ENCODE measurements at regions of chr21 and their contacts with region 1.

Region 1: DNA sequence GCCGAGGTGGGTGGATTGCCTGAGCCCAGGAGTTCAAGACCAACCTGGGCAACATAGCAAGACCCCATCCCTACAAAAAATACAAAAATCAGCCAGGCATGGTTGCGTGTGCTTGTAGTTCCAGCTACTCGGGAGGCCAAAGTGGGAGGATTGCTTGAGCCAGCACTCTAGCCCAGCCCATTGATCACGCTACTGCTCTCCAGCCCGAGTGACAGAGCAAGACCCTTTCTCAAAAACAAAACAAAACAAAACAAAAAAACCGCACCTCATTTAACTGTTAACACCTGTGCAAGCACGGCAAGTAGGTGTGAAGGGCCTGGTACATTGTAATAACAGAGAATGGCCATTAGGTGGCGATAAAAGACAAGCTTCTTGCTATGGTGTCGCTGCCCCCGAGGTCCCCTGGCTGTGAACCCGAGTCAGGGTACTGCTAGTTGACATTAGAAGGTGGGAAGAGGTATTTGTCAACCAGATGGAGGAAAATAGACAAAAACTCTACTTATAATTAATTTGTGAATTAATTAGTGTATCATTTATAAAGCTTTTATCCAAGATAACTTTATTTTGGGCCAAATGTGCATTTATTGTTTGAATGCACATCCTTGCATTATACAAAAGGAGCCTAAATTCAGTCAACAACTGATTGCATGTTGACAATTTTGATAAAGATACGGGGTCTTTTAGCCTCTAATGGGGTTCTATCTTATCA is 66.5 kb downstream of the SH3BGR start:
- DNase-seq: peak; percentile 68
- ATAC-seq: peak; percentile 60
- H3K4me3 ChIP-seq: no peak overlapping the region
- H3K4me3 Mint-ChIP-seq: no peak overlapping the region
- H3K27ac ChIP-seq: no peak overlapping the region
- H3K27ac Mint-ChIP-seq: no peak overlapping the region
- H3K4me1 ChIP-seq: no peaks in the 10 kb centered on the region
- H3K4me1 Mint-ChIP-seq: peaks cover 1% of the 10 kb centered on the region
- H3K27me3 ChIP-seq: peaks cover 0 to 3% (median 0%) of the 10 kb centered on the region in 4 experiments
- H3K27me3 Mint-ChIP-seq: peaks cover 3% of the 10 kb centered on the region
- CTCF ChIP-seq: peak; percentile 93

Region 2: GRCh38 chr21:39288987-39289386 is 229.3 kb before region 1 on chr21:
- CTCF ChIA-PET with region 1: no interaction called
- POLR2A ChIA-PET with region 1: no interaction called
- intact Hi-C with region 1: no loop called
- DNase-seq: no peak
- ATAC-seq: no peak
- H3K4me3 ChIP-seq: no peak overlapping the region
- H3K4me3 Mint-ChIP-seq: no peak overlapping the region
- H3K27ac ChIP-seq: no peak overlapping the region
- H3K27ac Mint-ChIP-seq: no peak overlapping the region
- H3K4me1 ChIP-seq: no peaks in the 10 kb centered on the region
- H3K4me1 Mint-ChIP-seq: peaks cover 3% of the 10 kb centered on the region
- H3K27me3 ChIP-seq: no peaks in the 10 kb centered on the region
- H3K27me3 Mint-ChIP-seq: no peaks in the 10 kb centered on the region
- CTCF ChIP-seq: no peak

Region 3: DNA sequence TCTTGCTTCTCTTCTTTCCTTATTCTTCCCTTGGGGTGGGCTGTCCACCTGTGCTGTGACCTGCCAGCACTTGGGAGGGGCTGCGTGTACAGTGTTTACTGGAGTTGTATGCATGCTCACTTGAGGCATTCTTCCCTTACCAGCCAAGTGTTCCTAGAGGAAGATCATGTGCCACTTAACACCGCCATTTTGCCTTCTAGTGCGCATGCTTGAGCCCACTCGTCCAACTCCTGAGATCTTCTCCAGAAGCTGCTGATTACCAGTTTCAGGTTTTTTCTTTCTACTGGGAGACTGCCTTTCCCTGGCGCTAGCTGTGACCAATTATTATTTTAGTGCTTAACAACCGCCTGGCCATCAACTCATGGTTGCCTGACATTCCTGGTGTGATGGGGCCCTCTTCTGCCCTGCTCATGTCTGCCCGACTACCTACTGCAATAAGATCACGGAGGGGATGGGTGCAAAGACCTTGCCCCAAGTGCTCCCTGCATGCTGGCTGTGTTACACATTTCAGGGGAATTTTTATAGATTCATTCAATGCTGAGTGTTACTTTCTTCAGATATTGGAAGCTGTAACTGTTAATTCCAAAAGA is 20.3 kb after region 1 on chr21:
- CTCF ChIA-PET with region 1: interaction called, 6 read pairs
- POLR2A ChIA-PET with region 1: no interaction called
- intact Hi-C with region 1: loop called (anchors 2 kb)
- DNase-seq: no peak
- ATAC-seq: no peak
- H3K4me3 ChIP-seq: no peak overlapping the region
- H3K4me3 Mint-ChIP-seq: no peak overlapping the region
- H3K27ac ChIP-seq: no peak overlapping the region
- H3K27ac Mint-ChIP-seq: no peak overlapping the region
- H3K4me1 ChIP-seq: no peaks in the 10 kb centered on the region
- H3K4me1 Mint-ChIP-seq: no peaks in the 10 kb centered on the region
- H3K27me3 ChIP-seq: peaks cover 0 to 2% (median 0%) of the 10 kb centered on the region in 4 experiments
- H3K27me3 Mint-ChIP-seq: peaks cover 9% of the 10 kb centered on the region
- CTCF ChIP-seq: no peak